ENCODE measurements at regions of chr1 and their contacts with region 1.

Region 1: DNA sequence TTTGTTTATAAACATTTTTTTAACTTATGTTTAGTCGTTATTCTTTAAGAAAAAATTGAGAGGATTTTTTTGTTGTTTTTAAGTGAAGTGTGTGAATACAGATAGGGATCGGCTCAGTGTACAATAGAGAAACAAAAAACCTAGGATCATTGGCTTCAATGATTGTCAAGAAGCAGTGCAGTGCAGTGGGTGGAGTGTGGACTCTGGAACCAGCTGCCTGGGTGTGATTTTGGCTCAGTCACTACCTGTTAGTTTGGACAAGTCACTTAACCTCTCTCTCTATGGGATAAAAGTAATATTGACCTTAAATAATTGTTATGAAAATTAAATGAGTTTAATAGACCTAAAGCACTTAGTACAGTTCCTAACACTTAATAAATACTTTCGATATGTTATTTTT is 41.3 kb downstream of the SCCPDH start:
- DNase-seq: no peak
- H3K4me3 ChIP-seq: no peak overlapping the region
- H3K27ac ChIP-seq: no peak overlapping the region
- H3K4me1 ChIP-seq: peaks cover 0 to 14% (median 6%) of the 10 kb centered on the region in 4 experiments; a peak in 6 of 7 replicates
- H3K27me3 ChIP-seq: no peaks in the 10 kb centered on the region
- CTCF ChIP-seq: no peak
- EP300 ChIP-seq: no peak
- POLR2A ChIP-seq: no peak
- RAD21 ChIP-seq: no peak

Region 2: GRCh38 chr1:246689409-246690008 is 76.0 kb before region 1 on chr1:
- CTCF ChIA-PET with region 1: no interaction called
- POLR2A ChIA-PET with region 1: no interaction called
- DNase-seq: peak; percentile 25 to 74
- H3K4me3 ChIP-seq: no peak overlapping the region
- H3K27ac ChIP-seq: no peak overlapping the region
- H3K4me1 ChIP-seq: no peaks in the 10 kb centered on the region
- H3K27me3 ChIP-seq: no peaks in the 10 kb centered on the region
- CTCF ChIP-seq: peak; percentile 46 to 78 (median 73)
- EP300 ChIP-seq: no peak
- POLR2A ChIP-seq: no peak
- RAD21 ChIP-seq: peak; percentile 70 to 78

Region 3: DNA sequence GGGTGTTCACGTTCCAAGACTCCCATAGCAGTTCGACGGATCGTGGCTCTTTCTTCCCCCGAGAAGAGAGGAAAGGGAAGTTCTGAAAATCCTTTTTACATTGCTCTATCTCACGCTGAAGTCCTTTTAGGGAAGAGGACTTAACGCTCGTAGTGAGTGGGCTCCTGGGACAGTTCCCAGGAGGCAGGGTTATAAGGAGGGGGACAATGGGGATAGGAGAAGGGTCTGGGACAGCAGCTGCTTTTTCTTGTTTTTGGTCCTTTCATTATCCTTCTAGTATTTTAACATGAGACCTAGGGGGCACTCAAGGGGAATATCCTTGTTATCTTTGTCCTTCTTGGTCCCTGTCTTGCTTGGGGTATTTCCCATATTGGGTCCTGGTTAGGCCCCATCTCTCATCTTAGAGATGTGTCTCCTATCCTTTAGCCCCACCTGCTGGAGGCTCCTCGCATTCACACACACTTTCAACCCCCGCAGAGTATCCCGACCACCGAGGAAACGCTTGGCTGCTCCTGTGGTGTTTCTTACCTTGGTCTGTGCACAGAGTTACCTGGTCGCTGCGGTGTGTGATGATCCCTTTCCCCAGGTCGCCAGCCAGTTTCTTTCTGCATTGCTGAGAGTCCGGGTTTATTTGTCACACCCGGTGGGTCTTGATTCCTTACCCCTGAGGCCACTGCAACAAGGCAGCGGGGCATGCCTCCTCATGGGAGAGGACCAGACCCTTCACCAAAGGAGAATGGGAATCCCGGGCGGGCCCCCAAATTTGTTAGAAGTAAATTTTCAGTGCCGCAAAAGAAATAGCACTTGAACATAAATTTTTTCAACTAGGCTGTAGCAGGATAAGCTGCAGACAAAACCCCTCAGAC is 11.6 kb before region 1 on chr1:
- CTCF ChIA-PET with region 1: interaction called, 12 read pairs
- POLR2A ChIA-PET with region 1: interaction called, 3 read pairs
- DNase-seq: peak; percentile 72 to 93
- H3K4me3 ChIP-seq: no peak overlapping the region
- H3K27ac ChIP-seq: no peak overlapping the region
- H3K4me1 ChIP-seq: peaks cover 0 to 2% (median 0%) of the 10 kb centered on the region in 4 experiments; a peak in 2 of 7 replicates
- H3K27me3 ChIP-seq: no peaks in the 10 kb centered on the region
- CTCF ChIP-seq: peak; percentile 71 to 83 (median 82)
- EP300 ChIP-seq: no peak
- POLR2A ChIP-seq: no peak
- RAD21 ChIP-seq: peak; percentile 93

Region 4: GRCh38 chr1:246801241-246802020 is 35.9 kb after region 1 on chr1:
- CTCF ChIA-PET with region 1: no interaction called
- POLR2A ChIA-PET with region 1: no interaction called
- DNase-seq: no peak
- H3K4me3 ChIP-seq: no peak overlapping the region
- H3K27ac ChIP-seq: no peak overlapping the region
- H3K4me1 ChIP-seq: peaks cover 0 to 2% (median under 1%) of the 10 kb centered on the region in 4 experiments; a peak in 5 of 7 replicates
- H3K27me3 ChIP-seq: no peaks in the 10 kb centered on the region
- CTCF ChIP-seq: no peak
- EP300 ChIP-seq: no peak
- POLR2A ChIP-seq: no peak
- RAD21 ChIP-seq: no peak

Measured in H1 (cell line).